ENCODE measurements at regions of chr2 and their contacts with region 1.

Region 1: GRCh38 chr2:64354857-64355680 is 98.9 kb upstream of the LGALSL start:
- DNase-seq: no peak
- ATAC-seq: no peak
- H3K4me3 ChIP-seq: no peak overlapping the region
- H3K27ac ChIP-seq: no peak overlapping the region
- H3K4me1 ChIP-seq: no peaks in the 10 kb centered on the region
- H3K27me3 ChIP-seq: no peaks in the 10 kb centered on the region

Region 2: GRCh38 chr2:64439194-64439593 is 84.1 kb after region 1 on chr2:
- intact Hi-C with region 1: no loop called
- DNase-seq: no peak
- ATAC-seq: no peak
- H3K4me3 ChIP-seq: no peak overlapping the region
- H3K27ac ChIP-seq: no peak overlapping the region
- H3K4me1 ChIP-seq: no peaks in the 10 kb centered on the region
- H3K27me3 ChIP-seq: no peaks in the 10 kb centered on the region

Region 3: GRCh38 chr2:64478502-64479252 is 123.6 kb after region 1 on chr2:
- intact Hi-C with region 1: loop called in 1 of 2 experiments (anchors 5 kb)
- DNase-seq: no peak
- ATAC-seq: no peak
- H3K4me3 ChIP-seq: no peak overlapping the region
- H3K27ac ChIP-seq: no peak overlapping the region
- H3K4me1 ChIP-seq: no peaks in the 10 kb centered on the region
- H3K27me3 ChIP-seq: no peaks in the 10 kb centered on the region

Measured in aorta (tissue), 5 donors.